ENCODE measurements at regions of chr2 and their contacts with region 1.

Region 1: GRCh38 chr2:190887089-190887488 is 6.5 kb downstream of the GLS start:
- DNase-seq: no peak
- ATAC-seq: peak; percentile 65
- H3K4me3 Mint-ChIP-seq: no peak overlapping the region
- H3K27ac Mint-ChIP-seq: peak overlapping the region; percentile 74
- H3K4me1 Mint-ChIP-seq: peaks cover 88% of the 10 kb centered on the region
- H3K27me3 Mint-ChIP-seq: no peaks in the 10 kb centered on the region
- CTCF ChIP-seq: no peak

Region 2: GRCh38 chr2:190853531-190854383 is 33.3 kb before region 1 on chr2:
- CTCF ChIA-PET with region 1: interaction called, 23 read pairs
- POLR2A ChIA-PET with region 1: interaction called, 50 read pairs
- intact Hi-C with region 1: no loop called
- DNase-seq: no peak
- ATAC-seq: peak; percentile 60
- H3K4me3 Mint-ChIP-seq: no peak overlapping the region
- H3K27ac Mint-ChIP-seq: peak overlapping the region; percentile 9
- H3K4me1 Mint-ChIP-seq: peaks cover 19% of the 10 kb centered on the region
- H3K27me3 Mint-ChIP-seq: no peaks in the 10 kb centered on the region
- CTCF ChIP-seq: no peak

Region 3: DNA sequence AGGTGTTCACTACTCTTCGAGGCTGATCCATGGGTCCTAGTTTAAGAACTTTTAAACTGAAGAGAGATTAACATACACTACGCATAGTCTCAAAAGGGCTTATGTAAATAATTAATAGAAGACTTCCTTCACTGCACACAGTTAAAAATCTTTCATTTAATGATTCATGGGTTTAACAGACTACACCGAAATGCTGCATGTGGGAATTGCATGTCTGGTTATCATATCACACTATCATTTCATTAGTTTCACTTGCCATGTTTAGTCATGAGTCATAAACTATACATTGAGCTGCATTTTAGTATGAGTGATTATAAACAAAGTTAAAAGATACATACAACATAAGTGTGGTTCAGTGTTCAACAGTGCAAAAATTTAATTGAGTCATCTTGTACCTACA is 24.7 kb after region 1 on chr2:
- CTCF ChIA-PET with region 1: no interaction called
- POLR2A ChIA-PET with region 1: no interaction called
- intact Hi-C with region 1: loop called (anchors 2 kb)
- DNase-seq: no peak
- ATAC-seq: peak; percentile 34
- H3K4me3 Mint-ChIP-seq: no peak overlapping the region
- H3K27ac Mint-ChIP-seq: peak overlapping the region; percentile 60
- H3K4me1 Mint-ChIP-seq: peaks cover 8% of the 10 kb centered on the region
- H3K27me3 Mint-ChIP-seq: no peaks in the 10 kb centered on the region
- CTCF ChIP-seq: no peak

Region 4: GRCh38 chr2:192390401-192390800 is 1503.3 kb after region 1 on chr2:
- CTCF ChIA-PET with region 1: no interaction called
- POLR2A ChIA-PET with region 1: no interaction called
- intact Hi-C with region 1: no loop called
- DNase-seq: no peak
- ATAC-seq: no peak
- H3K4me3 Mint-ChIP-seq: no peak overlapping the region
- H3K27ac Mint-ChIP-seq: no peak overlapping the region
- H3K4me1 Mint-ChIP-seq: no peaks in the 10 kb centered on the region
- H3K27me3 Mint-ChIP-seq: no peaks in the 10 kb centered on the region
- CTCF ChIP-seq: no peak

Measured in activated B cell treated with CpG ODN at 0.5 μM for 24 hours (primary cell).